Heart left ventricle (tissue), 16 donors: ENCODE measurements at regions of chr15 and their contacts with region 1.

Region 1: DNA sequence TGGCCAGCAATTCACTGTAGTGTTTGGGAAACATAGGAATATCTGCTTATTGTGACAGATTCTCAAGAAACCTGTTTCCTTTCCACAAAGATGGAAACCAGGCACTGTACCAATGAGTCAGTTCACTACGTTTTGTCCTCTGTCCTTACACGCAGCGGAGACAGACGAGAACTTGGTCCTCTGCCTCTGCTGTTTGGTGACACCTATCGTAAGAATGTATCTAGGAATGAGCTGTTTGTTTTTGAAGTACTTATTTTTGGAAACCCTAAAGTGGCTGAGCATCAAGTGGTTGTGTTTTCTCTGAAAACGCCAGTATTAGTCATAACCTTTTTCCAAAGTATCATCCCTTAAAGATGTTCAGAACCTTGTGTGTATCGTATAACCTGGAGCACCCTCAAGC is 93.0 kb downstream of the PGPEP1L start:
- DNase-seq: no peak
- ATAC-seq: no peak
- H3K4me3 ChIP-seq: no peak overlapping the region
- H3K27ac ChIP-seq: peak overlapping the region in 1 of 12 donors; percentile 25
- H3K4me1 ChIP-seq: peaks cover 0 to 43% (median 15%) of the 10 kb centered on the region in 12 donors
- H3K27me3 ChIP-seq: no peaks in the 10 kb centered on the region
- CTCF ChIP-seq: no peak
- POLR2A ChIP-seq: no peak

Region 2: DNA sequence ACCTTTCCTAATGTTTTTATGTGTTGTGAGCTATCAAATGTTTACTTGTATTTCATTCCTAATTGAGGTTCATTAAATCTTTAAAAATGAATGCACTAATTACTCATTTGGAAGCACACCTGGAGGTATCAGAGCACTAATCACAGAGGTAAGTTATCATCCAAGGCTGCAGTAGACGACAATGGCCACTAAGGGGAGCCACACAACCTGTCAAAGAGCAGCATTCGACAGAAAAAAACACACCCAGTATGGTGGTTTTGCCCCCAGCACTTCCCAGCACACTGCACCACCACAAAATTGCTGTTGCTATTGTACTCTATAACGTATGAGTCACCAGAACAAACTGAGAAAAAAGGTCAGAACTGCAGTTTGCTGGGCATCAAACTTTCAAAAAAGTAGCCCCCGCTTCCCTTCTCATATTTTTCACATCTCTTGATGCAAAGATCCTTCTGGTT is 472.2 kb before region 1 on chr15:
- intact Hi-C with region 1: loop called in 1 of 10 experiments (anchors 10 kb)
- DNase-seq: peak in 1 of 5 donors; percentile 39
- ATAC-seq: peak in 3 of 4 donors; percentile 45 to 50 (median 47)
- H3K4me3 ChIP-seq: no peak overlapping the region
- H3K27ac ChIP-seq: no peak overlapping the region
- H3K4me1 ChIP-seq: no peaks in the 10 kb centered on the region
- H3K27me3 ChIP-seq: peaks cover 0 to 36% (median 4%) of the 10 kb centered on the region in 9 donors
- CTCF ChIP-seq: peak; percentile 55 to 80 (median 72)
- POLR2A ChIP-seq: no peak

Region 3: DNA sequence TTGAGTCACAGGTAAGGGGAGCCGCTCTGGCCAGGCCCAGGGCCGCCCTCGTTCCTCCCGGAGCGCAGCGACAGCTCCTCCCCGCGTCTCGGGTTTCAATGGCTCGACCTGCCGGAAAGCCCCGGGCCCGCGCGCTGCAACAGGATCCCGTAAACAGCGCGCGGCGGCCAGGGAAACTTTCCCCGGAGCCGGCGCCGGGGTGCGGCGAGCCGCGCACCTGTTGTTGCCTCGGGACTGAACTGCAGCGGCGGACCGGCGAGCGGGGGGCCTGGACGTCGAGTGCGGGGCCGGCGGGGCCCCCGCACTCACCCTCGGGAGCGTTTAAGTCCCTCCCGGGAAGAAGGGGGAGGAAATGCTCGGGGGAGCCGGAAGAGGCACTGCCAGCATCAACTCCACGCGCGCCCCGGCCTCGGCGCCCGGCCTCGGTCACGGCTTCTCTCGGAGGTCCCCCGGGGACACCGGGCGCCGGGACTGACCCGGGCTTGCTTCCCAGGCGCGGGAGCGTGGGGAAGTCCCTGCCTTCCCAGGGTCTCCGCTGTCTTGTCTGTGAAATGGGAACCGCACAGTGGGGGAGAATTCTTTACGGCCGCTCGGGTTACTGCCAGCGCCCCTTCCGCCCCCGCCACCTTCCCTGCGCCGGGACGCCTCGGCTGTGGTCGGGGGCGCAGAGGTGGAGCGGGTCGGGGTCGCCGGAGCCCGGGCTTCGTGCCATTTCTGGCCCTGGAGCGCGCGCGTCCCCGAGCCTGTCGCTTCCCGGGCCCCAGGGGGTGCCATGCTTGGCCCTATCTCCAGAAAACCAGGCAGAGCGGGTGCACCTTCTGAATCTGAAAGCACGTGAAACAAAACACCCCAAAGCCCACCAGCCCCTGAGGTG is 100.4 kb after region 1 on chr15:
- intact Hi-C with region 1: no loop called
- DNase-seq: peak; percentile 40 to 75 (median 46)
- ATAC-seq: peak; percentile 63 to 89 (median 87)
- H3K4me3 ChIP-seq: peak overlapping the region; percentile 11 to 74 (median 62)
- H3K27ac ChIP-seq: peak overlapping the region in 3 of 12 donors; percentile 23 to 60 (median 47)
- H3K4me1 ChIP-seq: peaks cover 0 to 20% (median 8%) of the 10 kb centered on the region in 12 donors
- H3K27me3 ChIP-seq: peaks cover 0 to 9% (median 0%) of the 10 kb centered on the region in 9 donors
- CTCF ChIP-seq: no peak
- POLR2A ChIP-seq: no peak